BJ (cell line): ENCODE measurements at regions of chr14 and their contacts with region 1.

Region 1: GRCh38 chr14:89416002-89416995 is 734 bp downstream of the FOXN3 start:
- DNase-seq: peak; percentile 96
- H3K4me3 ChIP-seq: peak overlapping the region; percentile 74
- H3K27me3 ChIP-seq: no peaks in the 10 kb centered on the region
- CTCF ChIP-seq: no peak

Region 2: GRCh38 chr14:89270439-89271227 is 145.7 kb before region 1 on chr14:
- CTCF ChIA-PET with region 1: no interaction called
- POLR2A ChIA-PET with region 1: no interaction called
- DNase-seq: no peak
- H3K4me3 ChIP-seq: no peak overlapping the region
- H3K27me3 ChIP-seq: no peaks in the 10 kb centered on the region
- CTCF ChIP-seq: no peak

Region 3: GRCh38 chr14:89765346-89765745 is 349.0 kb after region 1 on chr14:
- CTCF ChIA-PET with region 1: no interaction called
- POLR2A ChIA-PET with region 1: interaction called, 16 read pairs
- DNase-seq: no peak
- H3K4me3 ChIP-seq: no peak overlapping the region
- H3K27me3 ChIP-seq: no peaks in the 10 kb centered on the region
- CTCF ChIP-seq: no peak